ENCODE measurements at regions of chr10 and their contacts with region 1.

Region 1: DNA sequence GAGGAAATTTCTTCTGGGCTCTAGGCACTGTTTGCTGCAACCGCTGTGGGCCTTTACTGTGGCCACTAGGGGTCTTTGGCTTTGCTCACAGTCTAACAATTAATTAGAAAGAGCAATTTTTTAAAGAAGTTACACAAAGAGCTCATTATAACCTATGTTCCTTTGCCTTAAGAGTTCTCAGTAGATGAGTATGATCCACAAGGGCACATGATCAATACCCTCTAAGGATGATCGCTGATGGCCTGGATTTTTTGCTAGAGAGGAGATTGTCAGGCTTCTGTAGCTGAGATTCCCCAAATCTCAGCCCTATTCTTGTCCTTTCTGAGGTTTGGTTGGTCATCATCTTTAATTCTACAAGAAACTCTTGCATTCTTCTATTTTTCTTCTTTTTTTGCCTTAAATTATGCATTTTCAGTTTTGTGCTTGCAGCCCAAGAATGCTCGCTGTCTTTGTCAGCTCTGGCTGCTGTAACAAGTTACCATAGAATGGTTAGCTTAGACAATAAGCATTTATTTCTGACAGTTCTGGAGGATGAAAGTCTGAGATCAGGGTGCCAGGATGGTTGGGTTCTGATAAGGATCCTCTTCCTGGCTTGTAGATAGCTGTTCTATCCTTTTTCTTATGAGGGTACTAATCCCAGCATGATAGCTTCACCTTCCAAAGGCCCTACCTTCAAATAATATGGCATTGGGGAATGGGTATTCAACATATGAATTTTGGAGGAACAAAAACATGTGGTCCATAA is 81.0 kb upstream of the RHOBTB1 start:
- DNase-seq: no peak
- H3K4me3 ChIP-seq: no peak overlapping the region
- H3K27ac ChIP-seq: no peak overlapping the region
- H3K4me1 ChIP-seq: no peaks in the 10 kb centered on the region
- H3K27me3 ChIP-seq: no peaks in the 10 kb centered on the region
- CTCF ChIP-seq: peak; percentile 72

Region 2: DNA sequence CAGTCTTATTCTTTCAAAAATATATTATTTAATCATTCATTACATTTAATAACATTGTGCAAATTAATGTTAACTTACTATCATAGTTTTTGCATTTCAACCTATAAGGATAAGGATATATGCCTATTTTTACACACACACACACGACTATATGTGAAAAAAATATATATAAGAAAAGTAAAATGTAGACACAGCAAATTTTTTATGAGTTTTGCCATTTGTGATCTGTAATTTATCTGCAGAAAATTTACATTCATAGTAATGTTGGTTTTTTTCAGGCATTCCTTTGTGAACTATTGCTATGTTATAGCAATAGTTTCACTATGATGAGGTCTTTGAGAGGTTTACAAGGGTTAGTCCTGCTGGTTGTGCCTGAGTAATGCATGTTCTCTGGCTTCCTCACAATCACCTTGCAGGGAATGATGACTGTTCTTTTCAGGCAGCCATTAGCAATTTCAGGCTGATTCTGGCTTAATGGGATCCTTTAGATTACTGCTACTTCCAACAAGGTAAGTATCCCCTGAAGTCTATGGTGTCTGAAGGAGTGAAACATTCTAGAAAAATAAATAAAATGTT is 430.5 kb before region 1 on chr10:
- CTCF ChIA-PET with region 1: no interaction called
- POLR2A ChIA-PET with region 1: no interaction called
- intact Hi-C with region 1: no loop called
- DNase-seq: no peak
- H3K4me3 ChIP-seq: no peak overlapping the region
- H3K27ac ChIP-seq: no peak overlapping the region
- H3K4me1 ChIP-seq: no peaks in the 10 kb centered on the region
- H3K27me3 ChIP-seq: no peaks in the 10 kb centered on the region
- CTCF ChIP-seq: no peak

Region 3: DNA sequence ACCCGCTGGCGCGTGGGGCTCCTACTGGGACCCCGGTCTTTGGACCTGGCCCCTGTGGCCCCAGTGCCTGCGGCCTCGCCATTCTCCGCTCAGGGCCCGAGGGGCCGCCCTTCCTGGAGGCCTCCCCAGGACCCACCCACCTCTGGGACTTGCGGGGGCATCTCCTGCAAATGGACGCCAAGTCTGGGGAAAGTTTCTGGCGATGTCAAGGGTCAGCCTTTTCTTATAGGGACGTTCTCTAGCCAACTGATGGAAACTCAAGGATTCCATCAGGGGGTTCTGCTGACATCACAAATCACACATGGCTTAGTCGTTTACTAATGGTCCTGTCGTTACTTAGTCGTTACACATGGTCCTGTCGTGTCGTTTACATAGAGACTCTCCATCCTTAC is 23.3 kb before region 1 on chr10:
- CTCF ChIA-PET with region 1: no interaction called
- POLR2A ChIA-PET with region 1: interaction called, 11 read pairs
- intact Hi-C with region 1: no loop called
- DNase-seq: no peak
- H3K4me3 ChIP-seq: peak overlapping the region; percentile 57; the same call in 1 of the 2 replicates
- H3K27ac ChIP-seq: no peak overlapping the region
- H3K4me1 ChIP-seq: peaks cover 5% of the 10 kb centered on the region; the same call in 1 of the 2 replicates
- H3K27me3 ChIP-seq: no peaks in the 10 kb centered on the region; the same call in 1 of the 2 replicates
- CTCF ChIP-seq: no peak

Region 4: DNA sequence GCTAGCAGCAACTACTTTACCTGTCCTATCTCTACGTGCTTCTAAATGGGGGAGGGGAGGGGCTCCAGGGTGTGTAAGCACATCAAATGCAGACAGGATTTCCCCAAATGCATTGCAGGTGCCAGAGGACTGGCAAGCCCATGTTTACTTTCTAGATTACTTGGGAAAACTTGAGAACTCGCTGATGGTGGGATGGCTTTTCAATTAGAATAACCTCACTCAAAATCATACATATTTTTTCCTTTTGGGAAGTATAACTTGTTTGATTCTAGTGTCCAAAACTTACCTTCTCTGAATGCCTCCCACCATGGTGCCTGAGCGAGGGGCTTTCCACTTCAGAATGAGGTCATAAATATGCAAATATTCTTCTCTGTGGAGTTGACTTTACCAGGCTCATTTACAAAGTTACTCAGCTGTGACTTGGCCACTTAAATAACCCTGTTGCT is 110.3 kb after region 1 on chr10:
- CTCF ChIA-PET with region 1: no interaction called
- POLR2A ChIA-PET with region 1: interaction called, 4 read pairs
- intact Hi-C with region 1: loop called (anchors 10 kb)
- DNase-seq: no peak
- H3K4me3 ChIP-seq: no peak overlapping the region
- H3K27ac ChIP-seq: no peak overlapping the region
- H3K4me1 ChIP-seq: 0 out of 2 replicates have a peak, but pooled peaks cover under 1% of the 10 kb centered on the region
- H3K27me3 ChIP-seq: no peaks in the 10 kb centered on the region
- CTCF ChIP-seq: no peak

Region 5: GRCh38 chr10:61765176-61766087 is 740.4 kb after region 1 on chr10:
- CTCF ChIA-PET with region 1: no interaction called
- POLR2A ChIA-PET with region 1: no interaction called
- intact Hi-C with region 1: no loop called
- DNase-seq: no peak
- H3K4me3 ChIP-seq: no peak overlapping the region
- H3K27ac ChIP-seq: no peak overlapping the region
- H3K4me1 ChIP-seq: peaks cover 19% of the 10 kb centered on the region
- H3K27me3 ChIP-seq: no peaks in the 10 kb centered on the region
- CTCF ChIP-seq: no peak

Measured in PC-9 (cell line).